ENCODE measurements at regions of chr13 and their contacts with region 1.

Region 1: GRCh38 chr13:52695856-52696255 is 43.2 kb downstream of the SUGT1 start:
- DNase-seq: no peak
- H3K4me3 ChIP-seq: no peak overlapping the region
- H3K27ac ChIP-seq: no peak overlapping the region
- H3K4me1 ChIP-seq: no peaks in the 10 kb centered on the region
- H3K27me3 ChIP-seq: no peaks in the 10 kb centered on the region
- CTCF ChIP-seq: no peak

Region 2: GRCh38 chr13:52463526-52463925 is 232.3 kb before region 1 on chr13:
- CTCF ChIA-PET with region 1: no interaction called
- POLR2A ChIA-PET with region 1: interaction called, 18 read pairs
- intact Hi-C with region 1: no loop called
- DNase-seq: no peak
- H3K4me3 ChIP-seq: no peak overlapping the region
- H3K27ac ChIP-seq: no peak overlapping the region
- H3K4me1 ChIP-seq: no peaks in the 10 kb centered on the region
- H3K27me3 ChIP-seq: no peaks in the 10 kb centered on the region
- CTCF ChIP-seq: no peak

Region 3: DNA sequence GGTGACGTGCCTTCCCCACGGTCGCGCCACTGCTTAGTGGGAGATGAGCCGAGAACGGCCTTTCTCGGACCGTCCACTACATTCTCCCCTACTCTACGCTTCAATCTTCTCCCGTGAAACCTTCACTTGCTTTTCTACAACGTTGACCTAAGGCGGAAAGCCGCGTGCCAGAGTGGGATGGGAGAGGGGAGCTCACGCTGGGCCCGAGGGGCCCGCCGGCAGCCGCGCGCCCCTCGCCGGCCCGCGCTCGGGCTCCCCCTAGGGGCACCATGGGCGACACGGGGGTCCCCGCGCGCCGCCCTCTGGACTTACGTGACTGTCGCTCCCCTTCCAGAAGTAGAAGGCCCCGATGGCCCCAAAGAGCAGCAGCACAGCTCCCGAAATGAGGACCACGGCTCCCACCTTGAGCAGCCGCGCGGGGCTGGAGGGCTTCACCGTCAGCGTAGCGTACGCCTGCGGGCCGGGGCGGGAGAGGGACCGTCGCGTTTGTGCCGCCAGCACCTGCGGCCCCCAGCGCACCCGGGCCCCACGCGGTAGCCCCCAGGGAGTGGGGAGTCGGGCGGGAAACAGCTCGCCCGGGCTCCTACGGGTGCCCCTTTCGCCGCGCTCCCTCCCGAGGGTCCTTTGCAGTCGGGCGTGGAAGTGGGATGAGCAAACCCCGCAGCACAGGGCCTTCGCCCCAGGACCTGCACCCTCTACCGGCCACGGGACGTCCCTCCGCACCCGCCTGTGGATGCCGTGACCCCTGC is 43.0 kb after region 1 on chr13:
- CTCF ChIA-PET with region 1: no interaction called
- POLR2A ChIA-PET with region 1: no interaction called
- intact Hi-C with region 1: no loop called
- DNase-seq: no peak
- H3K4me3 ChIP-seq: no peak overlapping the region
- H3K27ac ChIP-seq: no peak overlapping the region
- H3K4me1 ChIP-seq: no peaks in the 10 kb centered on the region
- H3K27me3 ChIP-seq: peaks cover 27% of the 10 kb centered on the region
- CTCF ChIP-seq: no peak

Region 4: GRCh38 chr13:52809310-52809769 is 113.5 kb after region 1 on chr13:
- CTCF ChIA-PET with region 1: no interaction called
- POLR2A ChIA-PET with region 1: no interaction called
- intact Hi-C with region 1: no loop called
- DNase-seq: peak; percentile 58 to 60
- H3K4me3 ChIP-seq: no peak overlapping the region
- H3K27ac ChIP-seq: no peak overlapping the region
- H3K4me1 ChIP-seq: no peaks in the 10 kb centered on the region
- H3K27me3 ChIP-seq: peaks cover 34% of the 10 kb centered on the region
- CTCF ChIP-seq: peak; percentile 79

Region 5: GRCh38 chr13:53010374-53011105 is 314.7 kb after region 1 on chr13:
- CTCF ChIA-PET with region 1: no interaction called
- POLR2A ChIA-PET with region 1: no interaction called
- intact Hi-C with region 1: no loop called
- DNase-seq: peak in 1 of 2 experiments; percentile 65
- H3K4me3 ChIP-seq: no peak overlapping the region
- H3K27ac ChIP-seq: no peak overlapping the region
- H3K4me1 ChIP-seq: no peaks in the 10 kb centered on the region
- H3K27me3 ChIP-seq: no peaks in the 10 kb centered on the region
- CTCF ChIP-seq: no peak